Posterior vena cava (tissue), 2 donors: ENCODE measurements at regions of chr19 and their contacts with region 1.

Region 1: DNA sequence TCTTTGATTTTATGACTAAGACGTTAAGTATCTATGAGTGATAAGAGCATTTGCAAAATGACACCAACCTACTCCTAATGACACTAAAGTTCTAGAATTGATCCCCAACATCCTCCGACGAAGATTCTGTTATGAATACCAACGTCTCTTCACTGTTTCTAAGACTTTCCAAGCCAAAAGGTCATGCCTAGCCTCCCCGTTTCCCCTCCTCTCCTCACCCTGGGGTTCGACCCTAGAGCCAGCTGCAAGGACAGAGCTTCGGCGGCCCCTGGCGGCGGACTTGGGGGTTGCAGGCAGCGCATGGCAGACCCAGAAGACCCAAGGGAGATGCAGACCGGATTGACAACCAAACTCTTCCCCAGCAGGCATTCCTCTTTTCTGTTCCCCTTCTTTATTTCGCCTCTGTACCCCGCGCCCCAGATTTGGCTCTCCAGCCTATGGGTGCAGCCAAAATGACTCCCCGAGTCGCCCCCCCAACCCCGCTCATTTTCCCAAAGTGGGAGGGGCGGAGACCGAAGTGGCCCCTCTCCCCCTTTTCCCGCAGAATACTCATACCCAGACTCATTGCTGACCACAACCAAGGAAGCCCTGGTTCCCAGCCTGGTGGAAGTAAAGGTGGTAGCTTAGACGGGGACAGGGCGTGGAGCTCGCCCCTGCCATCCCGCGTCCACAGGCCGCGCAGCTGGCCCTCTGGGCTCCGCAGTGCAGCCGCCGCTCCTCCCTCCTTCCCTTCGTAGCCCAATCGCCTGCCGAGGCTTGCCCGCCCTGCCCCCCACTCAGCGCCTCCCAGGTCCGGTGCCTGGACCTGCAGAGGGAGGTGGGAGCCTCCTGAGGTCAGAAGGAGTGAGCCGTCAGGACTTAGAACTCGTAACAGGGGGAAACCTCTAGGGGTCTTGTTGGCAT is 4.1 kb upstream of the EML2 start:
- DNase-seq: peak; percentile 95

Region 2: GRCh38 chr19:45547976-45548609 is 95.2 kb before region 1 on chr19:
- intact Hi-C with region 1: no loop called
- DNase-seq: no peak

Region 3: DNA sequence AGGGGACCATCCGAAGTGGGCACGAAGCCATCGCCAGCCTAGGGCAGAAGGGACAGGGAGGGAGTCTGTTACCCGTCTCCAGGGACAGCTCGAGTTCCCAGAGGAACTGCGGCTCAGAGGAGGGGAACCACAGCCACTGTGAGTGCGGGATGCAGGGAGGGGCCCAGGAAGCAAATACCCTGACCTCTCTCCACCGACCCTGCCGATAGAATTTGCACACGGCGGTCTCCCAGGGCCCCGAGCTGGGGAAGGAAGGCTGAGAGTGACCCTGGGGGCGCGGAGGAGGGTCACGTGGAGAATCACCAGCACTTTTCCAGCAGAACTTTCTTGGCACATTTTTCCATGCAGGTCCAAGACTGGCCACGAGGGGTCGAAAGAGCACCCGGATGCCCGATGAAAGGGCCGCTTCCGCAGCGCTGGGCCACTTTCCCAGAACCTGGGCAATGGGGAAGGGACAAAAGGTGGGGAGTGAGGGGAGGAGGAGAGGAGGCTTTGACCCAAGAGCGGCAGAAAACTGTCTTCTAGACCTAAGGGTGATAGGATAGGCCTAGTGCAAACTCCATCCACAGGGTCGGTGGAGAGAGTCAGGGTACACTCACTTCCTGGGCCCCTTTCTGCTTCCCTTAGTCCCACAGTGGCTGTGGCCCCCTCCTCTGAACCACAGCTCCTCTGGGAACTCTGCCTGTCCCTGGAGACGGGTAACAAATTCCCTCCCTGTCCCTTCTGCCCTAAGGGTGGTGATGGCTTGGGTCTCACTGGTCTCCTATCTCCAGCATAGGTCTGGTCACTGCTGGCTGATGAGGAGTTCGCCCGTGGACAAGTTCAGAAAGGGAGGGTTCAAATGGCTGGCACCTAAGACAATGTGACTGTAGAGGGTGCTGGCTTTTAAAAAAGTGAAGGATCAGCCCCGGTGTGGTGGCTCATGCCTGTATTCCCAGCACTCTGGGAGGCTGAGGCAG is 35.9 kb before region 1 on chr19:
- intact Hi-C with region 1: loop called in 1 of 2 experiments (anchors 2 kb)
- DNase-seq: peak; percentile 92

Region 4: GRCh38 chr19:45670670-45671453 is 27.6 kb after region 1 on chr19:
- intact Hi-C with region 1: no loop called
- DNase-seq: peak; percentile 87

Region 5: DNA sequence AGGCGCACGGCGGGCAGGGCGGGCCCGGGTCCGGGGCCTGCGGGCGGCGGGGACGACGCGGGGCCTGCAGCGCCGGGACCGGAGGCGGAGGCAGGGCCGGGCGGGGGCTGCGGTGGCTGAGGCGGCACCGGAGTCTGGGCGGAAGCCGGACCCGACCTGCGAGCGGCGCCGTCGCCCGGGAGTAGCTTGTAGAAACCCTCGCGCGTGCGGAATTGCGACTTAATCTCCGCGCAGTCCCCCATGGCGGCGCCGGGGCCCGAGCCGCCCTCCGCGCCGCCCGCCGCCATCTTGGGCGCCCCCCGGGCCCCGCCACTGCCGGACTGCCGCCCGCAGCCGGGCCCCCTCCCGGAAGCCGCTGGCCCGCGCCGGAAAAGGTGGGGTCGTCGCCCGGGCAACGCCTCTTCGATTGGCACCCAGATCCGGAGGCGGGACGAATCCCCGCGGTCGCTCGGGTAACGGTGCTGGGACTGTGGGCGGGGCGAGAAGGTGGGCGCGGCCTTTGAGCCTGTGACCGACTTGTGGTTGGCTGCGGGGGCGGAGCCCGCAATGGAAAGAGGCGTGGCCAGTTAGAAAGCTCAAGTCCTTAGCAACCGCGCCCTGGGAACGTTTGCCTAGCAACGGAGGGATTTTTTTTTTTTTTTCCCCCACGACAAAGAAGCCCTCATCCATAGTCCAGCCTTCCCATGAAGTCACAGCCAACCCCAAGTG is 149.3 kb after region 1 on chr19 and contains the start of gene DMWD:
- intact Hi-C with region 1: no loop called
- DNase-seq: peak; percentile 100
- total RNA-seq, gene DMWD: 50.9 to 61.1 TPM